GM12878 (cell line): ENCODE measurements at regions of chr4 and their contacts with region 1.

Region 1: GRCh38 chr4:123599920-123600810 is 203.6 kb downstream of the SPRY1 start:
- DNase-seq: peak; percentile 85
- ATAC-seq: peak; percentile 98
- H3K4me3 ChIP-seq: no peak overlapping the region
- H3K27ac ChIP-seq: no peak overlapping the region
- H3K4me1 ChIP-seq: peaks cover 7% of the 10 kb centered on the region; the same call in 1 of the 2 replicates
- H3K27me3 ChIP-seq: no peaks in the 10 kb centered on the region
- CTCF ChIP-seq: no peak
- EP300 ChIP-seq: peak; percentile 77 to 83; a peak in 3 of 4 replicates
- POLR2A ChIP-seq: no peak
- RAD21 ChIP-seq: 0 out of 2 replicates have a peak, but pooled peaks have one; percentile 11

Region 2: GRCh38 chr4:123616951-123617461 is 16.8 kb after region 1 on chr4:
- CTCF ChIA-PET with region 1: no interaction called
- POLR2A ChIA-PET with region 1: no interaction called
- RAD21 ChIA-PET with region 1: no interaction called
- SMC1A ChIA-PET with region 1: interaction called, 15 read pairs
- in situ Hi-C with region 1: no loop called
- intact Hi-C with region 1: no loop called
- DNase-seq: no peak
- ATAC-seq: peak; percentile 75
- H3K4me3 ChIP-seq: no peak overlapping the region
- H3K27ac ChIP-seq: no peak overlapping the region
- H3K4me1 ChIP-seq: no peaks in the 10 kb centered on the region
- H3K27me3 ChIP-seq: no peaks in the 10 kb centered on the region; a peak in 2 of 4 replicates
- CTCF ChIP-seq: no peak
- EP300 ChIP-seq: no peak
- POLR2A ChIP-seq: no peak
- RAD21 ChIP-seq: no peak

Region 3: GRCh38 chr4:123649645-123650391 is 49.7 kb after region 1 on chr4:
- CTCF ChIA-PET with region 1: interaction called, 3 read pairs
- POLR2A ChIA-PET with region 1: interaction called, 5 read pairs
- RAD21 ChIA-PET with region 1: interaction called, 15 read pairs
- SMC1A ChIA-PET with region 1: interaction called, 5 read pairs
- in situ Hi-C with region 1: no loop called
- intact Hi-C with region 1: no loop called
- DNase-seq: no peak
- ATAC-seq: peak; percentile 72
- H3K4me3 ChIP-seq: no peak overlapping the region
- H3K27ac ChIP-seq: no peak overlapping the region
- H3K4me1 ChIP-seq: no peaks in the 10 kb centered on the region; the same call in 1 of the 2 replicates
- H3K27me3 ChIP-seq: no peaks in the 10 kb centered on the region
- CTCF ChIP-seq: no peak
- EP300 ChIP-seq: no peak
- POLR2A ChIP-seq: no peak
- RAD21 ChIP-seq: no peak

Region 4: DNA sequence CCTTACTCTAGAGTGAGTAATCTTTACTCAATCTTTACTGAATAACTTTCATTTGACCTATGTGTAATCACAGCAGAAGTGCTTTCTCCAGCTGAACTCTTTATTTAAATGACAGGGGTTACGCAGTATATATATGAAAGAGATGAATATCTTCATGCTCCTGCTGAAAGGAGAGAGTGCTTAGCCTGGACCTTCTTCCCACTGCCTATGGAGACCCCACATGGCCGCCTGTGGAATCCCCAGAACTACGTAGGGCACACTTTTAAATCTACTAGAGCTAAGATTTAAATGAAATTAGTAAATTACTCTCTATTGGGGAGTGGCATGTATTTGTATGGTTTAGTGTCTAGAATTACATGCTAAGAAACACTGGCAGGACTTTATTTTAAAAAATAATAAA is 721.2 kb after region 1 on chr4:
- CTCF ChIA-PET with region 1: no interaction called
- POLR2A ChIA-PET with region 1: no interaction called
- RAD21 ChIA-PET with region 1: no interaction called
- SMC1A ChIA-PET with region 1: no interaction called
- in situ Hi-C with region 1: no loop called
- intact Hi-C with region 1: no loop called
- DNase-seq: no peak
- ATAC-seq: no peak
- H3K4me3 ChIP-seq: no peak overlapping the region
- H3K27ac ChIP-seq: no peak overlapping the region
- H3K4me1 ChIP-seq: no peaks in the 10 kb centered on the region
- H3K27me3 ChIP-seq: no peaks in the 10 kb centered on the region
- CTCF ChIP-seq: no peak
- EP300 ChIP-seq: no peak
- POLR2A ChIP-seq: no peak
- RAD21 ChIP-seq: no peak